ENCODE measurements at regions of chr15 and their contacts with region 1.

Region 1: DNA sequence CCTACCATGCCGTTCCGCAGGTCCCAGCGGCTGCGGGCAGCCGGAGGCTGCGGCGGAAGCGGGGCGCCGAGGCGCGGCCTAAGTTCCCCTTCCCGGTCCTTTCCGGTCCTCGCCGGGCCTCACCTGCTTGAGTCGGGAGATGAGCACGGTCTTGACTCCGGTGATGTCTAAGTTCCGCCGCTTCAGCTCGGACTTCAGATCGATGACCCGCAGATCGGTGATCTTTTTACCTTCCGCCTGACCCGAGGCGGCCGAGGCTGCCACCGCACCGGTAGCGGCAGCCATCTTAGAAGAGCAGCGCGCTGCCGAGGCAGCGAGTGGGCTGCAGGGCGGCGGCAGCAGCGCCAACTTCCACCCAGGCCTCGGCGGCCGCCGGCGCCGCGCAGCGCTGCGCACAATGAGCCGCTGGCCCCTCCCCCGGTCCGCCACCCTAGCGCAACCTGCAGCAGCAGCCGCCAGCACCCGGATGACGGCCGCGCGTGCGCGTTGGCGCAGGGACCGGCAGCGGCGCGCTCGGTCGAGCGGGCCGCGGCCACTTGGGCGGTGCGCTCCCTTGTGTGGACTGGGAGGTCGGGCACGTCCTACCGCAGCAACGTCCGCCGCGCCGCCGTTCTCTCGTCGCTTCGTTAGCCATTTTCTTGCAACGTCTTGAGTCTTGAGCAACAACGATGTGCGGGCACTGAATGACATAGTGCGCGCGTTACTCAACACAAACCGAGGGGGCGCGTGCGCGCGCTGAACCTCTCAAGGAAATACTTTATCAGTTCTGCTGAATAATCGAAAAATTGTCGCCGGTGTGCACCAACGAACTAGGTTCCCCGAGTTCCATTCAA is at the start of gene SLTM:
- DNase-seq: peak; percentile 92 to 95
- ATAC-seq: peak; percentile 97 to 99 (median 98)
- H3K4me3 ChIP-seq: peak within 1 kb of the TSS; percentile 68 to 92 (median 82)
- H3K27ac ChIP-seq: peak within 1 kb of the TSS; percentile 86 to 100 (median 99)
- H3K4me1 ChIP-seq: peaks cover 3 to 41% (median 32%) of the 10 kb centered on the region in 9 donors
- H3K27me3 ChIP-seq: no peaks in the 10 kb centered on the region
- CTCF ChIP-seq: peak in 4 of 9 donors; percentile 27 to 50 (median 30)
- total RNA-seq, gene SLTM: 37.8 to 65.0 (median 44.4) TPM

Region 2: DNA sequence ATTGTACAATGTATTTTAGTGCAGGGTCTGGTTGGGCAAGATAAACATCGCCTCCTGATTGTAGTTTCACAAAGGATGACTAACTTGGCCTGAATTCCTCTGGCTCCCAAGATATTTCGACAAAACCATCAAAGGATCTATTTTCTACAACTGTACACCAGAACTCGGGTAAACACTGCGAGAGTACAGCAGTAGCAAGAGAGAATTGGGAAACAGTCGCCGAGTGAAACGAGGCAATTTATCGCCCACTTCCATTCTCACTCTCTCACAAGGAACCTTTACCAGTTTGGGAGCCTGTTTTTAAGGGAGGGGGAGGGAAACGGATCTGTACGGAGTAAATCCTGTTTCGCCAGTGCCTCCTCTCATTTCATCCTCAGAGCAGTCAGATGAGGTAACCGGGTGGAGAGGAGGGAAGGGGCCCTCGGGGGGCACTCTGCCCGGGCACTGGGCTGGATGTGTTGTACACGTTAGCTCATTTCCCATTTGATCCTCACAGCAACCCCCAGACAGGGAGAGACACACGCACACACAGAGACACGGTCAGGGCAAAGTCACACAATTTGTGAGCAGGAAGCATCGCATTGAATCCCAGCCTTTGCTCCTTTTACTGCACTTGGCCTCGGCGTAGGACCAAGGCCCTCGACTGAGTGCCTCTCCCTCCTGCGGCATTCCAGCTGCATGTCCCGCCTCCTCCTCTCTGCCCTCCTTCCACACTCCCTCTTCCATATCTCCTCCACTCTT is 381.6 kb before region 1 on chr15:
- intact Hi-C with region 1: no loop called
- DNase-seq: no peak
- ATAC-seq: peak in 3 of 8 donors; percentile 3 to 38 (median 15)
- H3K4me3 ChIP-seq: peak overlapping the region in 5 of 10 donors; percentile 18 to 35 (median 24)
- H3K27ac ChIP-seq: peak overlapping the region in 2 of 10 donors; percentile 13 to 28
- H3K4me1 ChIP-seq: peaks cover 0 to 39% (median 15%) of the 10 kb centered on the region in 9 donors
- H3K27me3 ChIP-seq: no peaks in the 10 kb centered on the region
- CTCF ChIP-seq: no peak

Region 3: DNA sequence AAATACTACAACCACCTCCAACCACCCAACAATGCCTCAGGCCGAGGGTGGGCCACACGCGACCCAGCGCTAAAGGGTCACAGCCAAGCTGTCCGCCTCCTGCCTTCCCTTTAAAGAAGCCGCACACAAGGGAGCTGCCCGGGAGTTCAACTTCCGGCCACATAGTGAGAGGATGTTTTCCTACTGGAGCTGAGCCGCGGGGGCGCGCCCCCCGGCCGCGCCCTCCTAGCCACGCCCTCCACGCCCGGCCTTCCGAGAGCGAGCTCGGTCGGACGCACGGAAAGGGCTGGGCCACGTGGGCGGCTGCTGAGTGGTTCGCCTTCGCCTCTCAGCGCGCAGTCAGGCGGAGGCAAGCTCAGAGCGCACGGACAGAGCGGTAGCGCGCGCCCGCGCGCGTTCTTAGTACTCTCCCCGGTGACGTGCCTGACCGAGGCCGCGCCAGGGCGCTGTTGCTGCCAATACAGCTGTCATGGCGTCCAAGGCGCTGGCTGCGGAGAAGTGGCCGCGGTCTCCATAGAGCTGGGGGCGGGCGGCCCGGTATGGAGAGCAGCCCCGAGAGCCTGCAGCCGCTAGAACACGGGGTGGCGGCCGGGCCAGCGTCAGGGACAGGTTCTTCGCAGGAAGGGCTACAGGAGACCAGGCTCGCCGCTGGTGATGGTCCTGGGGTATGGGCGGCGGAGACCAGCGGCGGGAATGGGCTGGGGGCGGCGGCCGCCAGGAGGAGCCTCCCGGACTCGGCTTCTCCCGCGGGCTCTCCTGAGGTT is 162.5 kb before region 1 on chr15 and contains the start of gene MINDY2:
- intact Hi-C with region 1: loop called in 3 of 10 experiments (anchors 5 kb)
- DNase-seq: peak; percentile 97 to 99
- ATAC-seq: peak; percentile 97 to 99 (median 98)
- H3K4me3 ChIP-seq: peak within 1 kb of the TSS; percentile 77 to 100 (median 90)
- H3K27ac ChIP-seq: peak within 1 kb of the TSS; percentile 89 to 99 (median 98)
- H3K4me1 ChIP-seq: peaks cover 2 to 52% (median 46%) of the 10 kb centered on the region in 9 donors
- H3K27me3 ChIP-seq: no peaks in the 10 kb centered on the region
- CTCF ChIP-seq: peak in 8 of 9 donors; percentile 0 to 55 (median 42)
- total RNA-seq, gene MINDY2: 26.9 to 37.4 (median 32.7) TPM

Region 4: GRCh38 chr15:58966698-58967097 is 33.2 kb after region 1 on chr15:
- intact Hi-C with region 1: no loop called
- DNase-seq: no peak
- ATAC-seq: no peak
- H3K4me3 ChIP-seq: no peak overlapping the region
- H3K27ac ChIP-seq: no peak overlapping the region
- H3K4me1 ChIP-seq: no peaks in the 10 kb centered on the region
- H3K27me3 ChIP-seq: peaks cover 0 to 4% (median 0%) of the 10 kb centered on the region in 7 donors
- CTCF ChIP-seq: no peak

Region 5: DNA sequence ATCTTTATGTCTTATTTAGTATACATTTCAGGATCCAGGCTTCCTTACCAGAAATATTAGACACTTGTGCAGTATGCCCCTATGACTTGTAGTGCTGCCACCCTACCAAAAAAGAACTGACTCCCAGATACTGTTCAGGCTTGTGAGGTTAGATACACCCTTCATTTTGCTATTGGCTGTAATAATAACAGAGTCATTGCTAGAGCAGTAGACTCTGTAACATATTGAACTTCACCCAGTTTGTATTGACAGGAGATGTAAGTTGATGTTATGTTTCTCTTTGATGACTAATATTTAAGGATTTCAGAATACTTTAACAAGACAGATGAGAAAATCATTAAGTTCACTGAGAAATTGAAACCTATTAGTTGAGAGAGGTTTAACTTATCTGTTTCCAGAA is 86.8 kb after region 1 on chr15:
- intact Hi-C with region 1: no loop called
- DNase-seq: no peak
- ATAC-seq: no peak
- H3K4me3 ChIP-seq: no peak overlapping the region
- H3K27ac ChIP-seq: no peak overlapping the region
- H3K4me1 ChIP-seq: peaks cover 0 to 9% (median 0%) of the 10 kb centered on the region in 9 donors
- H3K27me3 ChIP-seq: no peaks in the 10 kb centered on the region
- CTCF ChIP-seq: no peak

Region 6: DNA sequence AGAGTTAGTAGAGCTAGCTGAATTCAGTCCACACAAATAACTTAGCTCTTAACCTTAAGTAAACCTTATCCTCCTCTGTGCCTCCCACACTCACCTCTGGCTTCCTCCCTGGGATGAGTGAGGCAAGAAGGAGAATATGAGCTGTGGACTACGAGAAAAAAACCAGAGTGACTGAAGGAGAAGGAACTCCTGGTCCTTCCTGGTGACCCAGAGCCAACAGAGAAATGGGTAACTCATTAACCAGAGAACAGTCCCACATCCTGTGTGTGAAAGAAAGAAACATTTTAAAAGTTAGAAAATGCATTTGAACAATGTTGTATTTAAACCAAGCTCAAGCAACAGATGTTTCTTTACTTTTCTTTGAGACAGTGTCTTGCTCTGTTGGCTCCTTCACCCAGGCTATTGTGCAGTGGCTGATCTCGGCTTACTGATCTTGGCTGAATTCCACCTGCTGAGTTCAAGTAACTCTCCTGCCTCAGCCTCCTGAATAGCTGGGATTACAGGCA is 476.9 kb after region 1 on chr15:
- intact Hi-C with region 1: no loop called
- DNase-seq: no peak
- ATAC-seq: peak in 5 of 8 donors; percentile 32 to 63 (median 53)
- H3K4me3 ChIP-seq: no peak overlapping the region
- H3K27ac ChIP-seq: peak overlapping the region in 3 of 10 donors; percentile 16 to 33 (median 32)
- H3K4me1 ChIP-seq: peaks cover 0 to 34% (median 6%) of the 10 kb centered on the region in 9 donors
- H3K27me3 ChIP-seq: no peaks in the 10 kb centered on the region
- CTCF ChIP-seq: no peak

Region 7: DNA sequence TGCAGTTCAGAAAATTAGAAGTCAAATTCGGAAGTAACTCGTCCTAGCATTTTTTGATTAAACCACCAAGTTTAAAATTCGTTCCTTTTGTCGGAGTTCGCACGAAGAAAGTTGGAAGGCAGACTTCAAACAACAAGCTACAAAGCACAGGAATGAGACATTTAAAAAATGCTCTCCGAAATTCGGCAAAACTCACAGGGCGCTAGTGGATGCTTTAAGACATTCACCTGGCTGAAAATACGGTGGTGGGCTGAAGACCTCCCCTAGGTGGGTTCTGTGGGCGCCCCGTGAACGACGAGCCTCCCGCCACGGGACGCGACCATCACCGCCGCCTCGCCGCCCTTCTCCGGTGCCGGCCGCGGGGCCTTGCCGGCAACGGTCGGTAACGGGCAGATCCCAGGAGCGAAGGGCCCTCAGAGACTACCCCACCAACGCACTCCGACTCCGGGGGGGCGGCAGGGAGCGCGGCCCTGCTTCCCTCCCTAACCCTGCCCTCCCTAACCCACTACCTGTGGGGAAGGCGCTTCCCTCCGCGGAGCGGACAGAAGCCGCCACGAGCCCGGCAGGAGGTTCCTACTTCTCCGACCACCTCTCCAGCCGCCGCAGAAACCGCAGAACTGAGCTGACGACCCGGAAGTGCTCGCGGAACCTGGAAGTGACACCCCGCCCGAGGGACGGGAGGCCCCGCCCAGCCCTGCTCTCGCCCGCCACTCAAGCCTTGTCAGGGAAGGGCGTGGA is 723.6 kb after region 1 on chr15 and contains the start of gene GTF2A2:
- intact Hi-C with region 1: loop called in 1 of 10 experiments (anchors 10 kb)
- DNase-seq: peak; percentile 95 to 96
- ATAC-seq: peak; percentile 100
- H3K4me3 ChIP-seq: peak within 1 kb of the TSS; percentile 73 to 99 (median 92)
- H3K27ac ChIP-seq: peak within 1 kb of the TSS in 9 of 10 donors; percentile 59 to 90 (median 85)
- H3K4me1 ChIP-seq: peaks cover 0 to 32% (median 23%) of the 10 kb centered on the region in 9 donors
- H3K27me3 ChIP-seq: no peaks in the 10 kb centered on the region
- CTCF ChIP-seq: no peak
- total RNA-seq, gene GTF2A2: 121 to 150 (median 129) TPM

Measured in heart right ventricle (tissue), 16 donors.